HepG2 (cell line): ENCODE measurements at regions of chr2 and their contacts with region 1.

Region 1: GRCh38 chr2:168136392-168136977 is 110.9 kb downstream of the STK39 start:
- DNase-seq: peak; percentile 53
- ATAC-seq: peak; percentile 56
- H3K4me3 ChIP-seq: no peak overlapping the region
- H3K27ac ChIP-seq: no peak overlapping the region
- H3K4me1 ChIP-seq: no peaks in the 10 kb centered on the region
- H3K27me3 ChIP-seq: no peaks in the 10 kb centered on the region
- CTCF ChIP-seq: peak; percentile 66
- EP300 ChIP-seq: no peak
- POLR2A ChIP-seq: no peak
- RAD21 ChIP-seq: peak; percentile 35; the same call in 1 of the 2 replicates

Region 2: DNA sequence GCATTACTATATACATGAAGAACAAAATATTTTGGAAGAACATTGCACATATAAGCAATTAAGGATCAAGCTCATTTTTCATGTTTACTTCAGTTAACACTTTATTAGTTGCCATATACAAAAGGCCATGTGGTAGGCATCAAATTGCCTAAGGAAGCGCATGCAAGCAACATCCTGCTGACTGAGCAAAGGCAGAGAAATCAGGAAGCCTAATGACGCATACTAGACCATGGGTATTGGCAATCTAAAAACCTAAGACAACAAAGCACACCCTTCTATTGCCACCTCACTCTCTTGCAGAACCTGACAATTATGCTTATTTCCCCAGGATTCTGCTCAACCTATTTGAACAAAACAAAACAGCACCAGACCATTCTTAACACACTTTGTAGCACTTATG is 61.0 kb before region 1 on chr2:
- CTCF ChIA-PET with region 1: no interaction called
- POLR2A ChIA-PET with region 1: no interaction called
- in situ Hi-C with region 1: no loop called
- intact Hi-C with region 1: no loop called
- DNase-seq: no peak
- ATAC-seq: no peak
- H3K4me3 ChIP-seq: no peak overlapping the region
- H3K27ac ChIP-seq: no peak overlapping the region
- H3K4me1 ChIP-seq: no peaks in the 10 kb centered on the region
- H3K27me3 ChIP-seq: no peaks in the 10 kb centered on the region
- CTCF ChIP-seq: no peak
- EP300 ChIP-seq: no peak
- POLR2A ChIP-seq: no peak
- RAD21 ChIP-seq: no peak

Region 3: GRCh38 chr2:168194784-168195522 is 58.5 kb after region 1 on chr2:
- CTCF ChIA-PET with region 1: no interaction called
- POLR2A ChIA-PET with region 1: no interaction called
- in situ Hi-C with region 1: no loop called
- intact Hi-C with region 1: loop called (anchors 5 kb)
- DNase-seq: no peak
- ATAC-seq: no peak
- H3K4me3 ChIP-seq: no peak overlapping the region
- H3K27ac ChIP-seq: no peak overlapping the region
- H3K4me1 ChIP-seq: peaks cover 96% of the 10 kb centered on the region
- H3K27me3 ChIP-seq: no peaks in the 10 kb centered on the region
- CTCF ChIP-seq: no peak
- EP300 ChIP-seq: no peak
- POLR2A ChIP-seq: no peak
- RAD21 ChIP-seq: no peak

Region 4: GRCh38 chr2:168293766-168294165 is 157.3 kb after region 1 on chr2:
- CTCF ChIA-PET with region 1: no interaction called
- POLR2A ChIA-PET with region 1: no interaction called
- in situ Hi-C with region 1: no loop called
- intact Hi-C with region 1: loop called (anchors 2 kb)
- DNase-seq: peak; percentile 23
- ATAC-seq: peak; percentile 87
- H3K4me3 ChIP-seq: no peak overlapping the region
- H3K27ac ChIP-seq: no peak overlapping the region
- H3K4me1 ChIP-seq: no peaks in the 10 kb centered on the region
- H3K27me3 ChIP-seq: no peaks in the 10 kb centered on the region
- CTCF ChIP-seq: peak; percentile 51
- EP300 ChIP-seq: no peak
- POLR2A ChIP-seq: no peak
- RAD21 ChIP-seq: peak; percentile 32; the same call in 1 of the 2 replicates

Region 5: DNA sequence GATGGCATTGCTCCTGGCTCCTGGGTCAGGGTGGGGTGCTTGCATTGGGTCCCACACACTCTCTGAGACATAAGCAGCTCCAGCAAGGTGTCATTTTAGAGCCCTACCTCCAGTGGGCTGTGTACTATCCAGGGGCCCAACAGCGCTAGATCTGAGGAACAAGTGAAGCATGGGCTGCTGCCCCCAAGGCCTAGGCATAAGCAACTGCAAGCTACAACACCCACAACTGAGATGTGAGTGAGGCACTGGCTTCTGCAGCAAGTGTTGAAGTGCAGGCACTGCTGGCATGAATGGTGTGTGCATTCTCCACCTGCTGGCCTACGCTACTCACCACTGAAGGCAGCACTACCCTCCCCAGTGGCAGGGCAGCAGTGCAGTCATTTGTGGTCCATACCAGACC is 191.9 kb after region 1 on chr2:
- CTCF ChIA-PET with region 1: no interaction called
- POLR2A ChIA-PET with region 1: no interaction called
- in situ Hi-C with region 1: no loop called
- intact Hi-C with region 1: loop called (anchors 2 kb)
- DNase-seq: peak; percentile 27
- ATAC-seq: peak; percentile 91
- H3K4me3 ChIP-seq: no peak overlapping the region
- H3K27ac ChIP-seq: no peak overlapping the region
- H3K4me1 ChIP-seq: peaks cover 13% of the 10 kb centered on the region
- H3K27me3 ChIP-seq: 0 out of 5 replicates have a peak, but pooled peaks cover 0 to 2% of the 10 kb centered on the region in 2 experiments
- CTCF ChIP-seq: peak; percentile 49
- EP300 ChIP-seq: no peak
- POLR2A ChIP-seq: no peak
- RAD21 ChIP-seq: no peak

Region 6: GRCh38 chr2:168336864-168337263 is 200.4 kb after region 1 on chr2:
- CTCF ChIA-PET with region 1: interaction called, 8 read pairs
- POLR2A ChIA-PET with region 1: no interaction called
- in situ Hi-C with region 1: no loop called
- intact Hi-C with region 1: loop called (anchors 1 kb)
- DNase-seq: peak; percentile 69
- ATAC-seq: peak; percentile 99
- H3K4me3 ChIP-seq: no peak overlapping the region
- H3K27ac ChIP-seq: no peak overlapping the region
- H3K4me1 ChIP-seq: peaks cover 5% of the 10 kb centered on the region; the same call in 1 of the 2 replicates
- H3K27me3 ChIP-seq: peaks cover 1 to 10% of the 10 kb centered on the region in 2 experiments; a peak in 2 of 5 replicates
- CTCF ChIP-seq: peak; percentile 88
- EP300 ChIP-seq: no peak
- POLR2A ChIP-seq: no peak
- RAD21 ChIP-seq: peak; percentile 81

Region 7: GRCh38 chr2:168920504-168921157 is 784.1 kb after region 1 on chr2:
- CTCF ChIA-PET with region 1: no interaction called
- POLR2A ChIA-PET with region 1: no interaction called
- in situ Hi-C with region 1: loop called (anchors 25 kb)
- intact Hi-C with region 1: no loop called
- DNase-seq: peak; percentile 34
- ATAC-seq: peak; percentile 45; the same call in 1 of the 3 replicates
- H3K4me3 ChIP-seq: no peak overlapping the region
- H3K27ac ChIP-seq: no peak overlapping the region
- H3K4me1 ChIP-seq: no peaks in the 10 kb centered on the region
- H3K27me3 ChIP-seq: peaks cover 0 to 8% of the 10 kb centered on the region in 2 experiments; a peak in 2 of 5 replicates
- CTCF ChIP-seq: peak; percentile 73
- EP300 ChIP-seq: no peak
- POLR2A ChIP-seq: no peak
- RAD21 ChIP-seq: 0 out of 2 replicates have a peak, but pooled peaks have one; percentile 22